ENCODE measurements at regions of chr12 and their contacts with region 1.

Region 1: GRCh38 chr12:11486623-11487444 is 91.5 kb upstream of the PRB2 start:
- DNase-seq: peak; percentile 60 to 92 (median 74)
- ATAC-seq: peak; percentile 98
- H3K4me3 ChIP-seq: no peak overlapping the region
- H3K4me3 Mint-ChIP-seq: no peak overlapping the region
- H3K27ac ChIP-seq: no peak overlapping the region
- H3K27ac Mint-ChIP-seq: no peak overlapping the region
- H3K4me1 ChIP-seq: peaks cover 4% of the 10 kb centered on the region
- H3K4me1 Mint-ChIP-seq: peaks cover 5% of the 10 kb centered on the region
- H3K27me3 ChIP-seq: no peaks in the 10 kb centered on the region
- H3K27me3 Mint-ChIP-seq: no peaks in the 10 kb centered on the region
- CTCF ChIP-seq: peak; percentile 100

Region 2: DNA sequence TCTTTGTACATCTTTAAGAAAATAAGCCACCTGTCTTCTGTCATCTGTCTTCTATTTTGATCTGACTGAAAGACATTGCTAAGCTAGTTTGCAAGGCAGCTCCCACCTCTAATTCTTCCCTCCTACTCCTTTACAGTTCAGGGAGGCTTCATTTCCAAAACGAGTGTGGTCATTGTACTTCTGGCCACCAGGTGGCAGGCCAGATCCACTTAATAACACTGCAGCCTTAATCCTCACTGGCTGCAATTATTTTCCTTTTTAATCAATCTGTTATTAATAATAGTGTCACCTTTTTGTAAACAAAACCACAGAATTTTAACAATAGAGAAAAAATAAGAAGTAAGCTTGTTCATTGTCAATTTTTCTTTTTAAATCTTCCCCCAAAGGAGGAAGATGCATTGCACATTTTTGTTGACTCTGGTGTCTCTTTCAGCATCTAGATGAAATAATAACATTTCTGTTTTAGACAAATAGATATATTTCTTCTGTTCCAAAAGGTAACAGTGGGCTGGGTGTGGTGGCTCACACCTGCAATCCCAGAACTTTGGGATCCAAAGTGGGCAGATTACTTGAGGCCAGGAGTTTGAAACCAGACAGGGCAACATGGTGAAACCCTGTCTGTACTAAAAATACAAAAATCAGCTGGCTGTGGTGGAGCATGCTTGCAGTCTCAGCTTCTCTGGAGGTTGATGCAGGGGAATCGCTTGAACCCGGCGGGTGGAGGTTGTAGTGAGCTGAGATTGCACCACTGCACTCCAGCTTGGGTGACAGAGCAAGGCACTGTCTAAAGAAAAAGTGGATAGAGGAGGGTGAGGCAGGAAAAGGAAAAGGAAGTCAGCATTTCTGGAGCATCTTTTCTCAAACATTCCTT is 1250.8 kb before region 1 on chr12:
- CTCF ChIA-PET with region 1: interaction called, 3 read pairs
- POLR2A ChIA-PET with region 1: no interaction called
- intact Hi-C with region 1: loop called (anchors 2 to 5 kb)
- DNase-seq: peak in 13 of 14 experiments; percentile 7 to 77 (median 33)
- ATAC-seq: peak; percentile 77
- H3K4me3 ChIP-seq: no peak overlapping the region
- H3K4me3 Mint-ChIP-seq: no peak overlapping the region
- H3K27ac ChIP-seq: no peak overlapping the region
- H3K27ac Mint-ChIP-seq: no peak overlapping the region
- H3K4me1 ChIP-seq: no peaks in the 10 kb centered on the region
- H3K4me1 Mint-ChIP-seq: no peaks in the 10 kb centered on the region
- H3K27me3 ChIP-seq: no peaks in the 10 kb centered on the region
- H3K27me3 Mint-ChIP-seq: no peaks in the 10 kb centered on the region
- CTCF ChIP-seq: peak; percentile 92

Region 3: DNA sequence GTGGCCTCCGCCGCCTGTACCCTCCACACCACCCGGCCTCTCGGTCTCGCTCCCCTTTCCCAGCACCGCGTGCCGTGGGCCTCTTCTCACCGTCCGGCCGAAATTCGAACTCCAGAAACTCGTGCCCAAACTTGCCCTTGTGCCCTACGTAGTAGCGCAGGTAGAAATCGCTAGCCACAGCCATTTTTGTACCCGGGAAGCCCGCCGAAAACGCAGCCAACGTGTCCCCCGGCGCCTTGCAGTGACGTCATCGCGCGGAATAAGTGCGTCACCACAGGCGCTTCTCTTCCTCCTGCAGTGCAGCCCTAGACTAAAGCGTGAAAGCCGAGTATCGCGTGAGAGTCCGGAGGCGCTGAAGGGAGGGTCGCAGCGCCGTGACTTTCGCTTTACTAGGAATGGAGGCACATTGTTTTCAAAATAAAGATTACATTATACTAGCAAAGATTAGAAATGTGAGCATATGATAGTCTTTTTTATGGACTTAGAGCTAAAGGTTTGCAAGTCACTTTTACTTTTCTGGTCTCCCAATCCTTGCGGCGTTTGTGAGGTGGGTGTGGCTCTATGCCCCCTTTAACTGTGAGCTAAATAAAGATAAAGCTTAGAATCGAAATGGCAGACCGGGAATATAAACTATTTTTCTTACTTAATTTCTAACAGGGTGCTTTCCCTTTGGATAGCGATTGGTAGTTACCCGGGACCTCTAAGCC is 873.3 kb before region 1 on chr12 and contains the start of gene MAGOHB:
- CTCF ChIA-PET with region 1: no interaction called
- POLR2A ChIA-PET with region 1: no interaction called
- intact Hi-C with region 1: loop called (anchors 5 to 10 kb)
- DNase-seq: peak; percentile 95 to 100 (median 98)
- ATAC-seq: peak; percentile 91
- H3K4me3 ChIP-seq: peak within 1 kb of the TSS; percentile 94
- H3K4me3 Mint-ChIP-seq: peak within 1 kb of the TSS; percentile 99
- H3K27ac ChIP-seq: peak within 1 kb of the TSS; percentile 93 to 95
- H3K27ac Mint-ChIP-seq: peak within 1 kb of the TSS; percentile 99
- H3K4me1 ChIP-seq: peaks cover 11% of the 10 kb centered on the region
- H3K4me1 Mint-ChIP-seq: peaks cover 26% of the 10 kb centered on the region
- H3K27me3 ChIP-seq: no peaks in the 10 kb centered on the region
- H3K27me3 Mint-ChIP-seq: peaks cover 17% of the 10 kb centered on the region
- CTCF ChIP-seq: no peak
- total RNA-seq, gene MAGOHB: 7.5 to 7.7 TPM

Region 4: DNA sequence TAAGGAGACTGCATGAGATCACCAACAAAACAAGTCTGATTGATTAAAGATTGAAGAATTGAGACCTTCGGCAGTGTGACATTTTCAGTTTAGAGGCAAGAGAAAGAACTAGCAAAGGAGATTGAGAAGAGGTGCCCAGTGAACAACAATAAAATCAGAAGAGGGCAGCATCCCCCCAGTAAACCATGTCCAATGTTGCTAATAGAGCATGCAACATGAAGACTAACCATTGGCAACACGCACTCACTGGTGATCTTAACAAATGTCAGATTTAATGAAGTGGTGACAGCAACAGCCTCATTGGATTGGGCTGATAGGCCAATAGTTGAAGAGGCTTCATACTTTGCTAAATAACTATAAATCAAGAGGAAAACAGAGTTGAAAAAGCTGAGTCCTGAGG is 527.0 kb before region 1 on chr12:
- CTCF ChIA-PET with region 1: no interaction called
- POLR2A ChIA-PET with region 1: no interaction called
- intact Hi-C with region 1: loop called (anchors 2 to 5 kb)
- DNase-seq: peak in 3 of 14 experiments; percentile 23 to 29 (median 27)
- ATAC-seq: peak; percentile 13
- H3K4me3 ChIP-seq: no peak overlapping the region
- H3K4me3 Mint-ChIP-seq: no peak overlapping the region
- H3K27ac ChIP-seq: no peak overlapping the region
- H3K27ac Mint-ChIP-seq: peak overlapping the region; percentile 37
- H3K4me1 ChIP-seq: peaks cover 10% of the 10 kb centered on the region
- H3K4me1 Mint-ChIP-seq: peaks cover 46% of the 10 kb centered on the region
- H3K27me3 ChIP-seq: no peaks in the 10 kb centered on the region
- H3K27me3 Mint-ChIP-seq: no peaks in the 10 kb centered on the region
- CTCF ChIP-seq: no peak

Region 5: DNA sequence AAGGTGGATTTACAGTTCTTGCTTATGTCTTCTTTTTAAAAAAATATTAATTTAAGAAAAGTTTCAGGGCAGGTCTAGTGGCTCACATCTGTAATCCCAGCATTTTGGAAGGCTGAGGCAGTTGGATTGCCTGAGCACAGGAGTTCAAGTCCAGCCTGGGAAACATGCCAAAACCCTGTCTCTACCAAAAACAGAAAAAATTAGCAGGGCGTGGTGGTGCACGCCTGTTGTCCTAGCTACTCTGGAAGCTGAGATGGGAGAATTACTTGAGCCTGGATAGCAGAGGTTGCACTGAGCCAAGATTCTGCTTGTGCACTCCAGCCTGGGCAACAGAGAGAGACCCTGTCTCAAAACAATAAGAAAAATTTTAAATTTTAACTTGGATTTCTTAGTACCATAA is 419.3 kb before region 1 on chr12:
- CTCF ChIA-PET with region 1: no interaction called
- POLR2A ChIA-PET with region 1: no interaction called
- intact Hi-C with region 1: no loop called
- DNase-seq: no peak
- ATAC-seq: no peak
- H3K4me3 ChIP-seq: no peak overlapping the region
- H3K4me3 Mint-ChIP-seq: no peak overlapping the region
- H3K27ac ChIP-seq: no peak overlapping the region
- H3K27ac Mint-ChIP-seq: no peak overlapping the region
- H3K4me1 ChIP-seq: no peaks in the 10 kb centered on the region
- H3K4me1 Mint-ChIP-seq: peaks cover 22% of the 10 kb centered on the region
- H3K27me3 ChIP-seq: no peaks in the 10 kb centered on the region
- H3K27me3 Mint-ChIP-seq: no peaks in the 10 kb centered on the region
- CTCF ChIP-seq: no peak

Region 6: DNA sequence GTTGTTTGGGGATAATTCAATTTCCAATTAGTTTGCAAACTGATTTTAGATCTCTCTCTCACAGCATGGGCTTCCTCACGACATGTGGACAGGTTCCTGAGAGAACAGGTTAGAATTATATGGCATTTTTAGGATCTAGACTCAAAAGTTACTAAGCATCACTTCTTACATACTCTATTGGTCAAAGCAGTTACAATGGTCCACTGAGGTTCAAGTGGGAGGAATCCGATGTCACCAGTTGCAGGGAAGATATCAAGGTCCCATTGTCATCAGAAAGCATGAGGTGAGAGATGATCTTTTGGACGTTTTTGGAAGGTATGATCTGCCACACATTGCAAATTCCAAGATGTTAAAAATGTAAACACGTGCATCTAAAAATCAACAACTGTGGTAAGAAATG is 234.7 kb before region 1 on chr12:
- CTCF ChIA-PET with region 1: no interaction called
- POLR2A ChIA-PET with region 1: no interaction called
- intact Hi-C with region 1: no loop called
- DNase-seq: no peak
- ATAC-seq: no peak
- H3K4me3 ChIP-seq: no peak overlapping the region
- H3K4me3 Mint-ChIP-seq: no peak overlapping the region
- H3K27ac ChIP-seq: no peak overlapping the region
- H3K27ac Mint-ChIP-seq: no peak overlapping the region
- H3K4me1 ChIP-seq: no peaks in the 10 kb centered on the region
- H3K4me1 Mint-ChIP-seq: no peaks in the 10 kb centered on the region
- H3K27me3 ChIP-seq: no peaks in the 10 kb centered on the region
- H3K27me3 Mint-ChIP-seq: no peaks in the 10 kb centered on the region
- CTCF ChIP-seq: no peak

Region 7: GRCh38 chr12:11827091-11828061 is 340.5 kb after region 1 on chr12:
- CTCF ChIA-PET with region 1: no interaction called
- POLR2A ChIA-PET with region 1: no interaction called
- intact Hi-C with region 1: no loop called
- DNase-seq: peak in 5 of 14 experiments; percentile 9 to 50 (median 29)
- ATAC-seq: no peak
- H3K4me3 ChIP-seq: no peak overlapping the region
- H3K4me3 Mint-ChIP-seq: peak overlapping the region; percentile 54
- H3K27ac ChIP-seq: no peak overlapping the region
- H3K27ac Mint-ChIP-seq: peak overlapping the region; percentile 71
- H3K4me1 ChIP-seq: peaks cover 31% of the 10 kb centered on the region
- H3K4me1 Mint-ChIP-seq: peaks cover 25% of the 10 kb centered on the region
- H3K27me3 ChIP-seq: no peaks in the 10 kb centered on the region
- H3K27me3 Mint-ChIP-seq: no peaks in the 10 kb centered on the region
- CTCF ChIP-seq: no peak

Measured in CD4-positive, alpha-beta T cell (primary cell).